Ovary (tissue), 10 donors: ENCODE measurements at regions of chr2 and their contacts with region 1.

Region 1: DNA sequence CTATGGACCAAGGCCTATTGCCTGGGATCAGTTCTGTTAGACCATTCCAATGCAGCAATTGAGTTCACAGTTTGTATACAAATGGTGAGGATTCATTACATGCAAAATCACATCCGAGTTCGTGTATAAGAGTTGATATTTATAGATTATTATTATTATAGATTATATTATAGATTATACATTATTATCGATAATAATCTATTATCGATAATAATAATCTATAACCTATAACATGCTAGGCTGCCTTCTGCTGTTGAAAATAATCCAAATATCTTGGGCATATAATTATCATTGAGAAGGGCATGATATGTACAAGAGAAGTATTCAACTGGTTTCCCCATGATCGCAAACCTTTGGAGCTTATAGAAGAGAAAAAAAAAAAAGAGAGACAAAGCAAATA is 135.7 kb downstream of the DPP4 start:
- DNase-seq: no peak
- H3K4me3 ChIP-seq: no peak overlapping the region
- H3K27ac ChIP-seq: no peak overlapping the region
- H3K4me1 ChIP-seq: no peaks in the 10 kb centered on the region
- H3K27me3 ChIP-seq: no peaks in the 10 kb centered on the region
- CTCF ChIP-seq: no peak
- EP300 ChIP-seq: no peak
- POLR2A ChIP-seq: no peak

Region 2: GRCh38 chr2:161104054-161104553 is 834.2 kb before region 1 on chr2:
- intact Hi-C with region 1: no loop called
- DNase-seq: no peak
- H3K4me3 ChIP-seq: no peak overlapping the region
- H3K27ac ChIP-seq: no peak overlapping the region
- H3K4me1 ChIP-seq: peaks cover 2% of the 10 kb centered on the region
- H3K27me3 ChIP-seq: no peaks in the 10 kb centered on the region
- CTCF ChIP-seq: no peak
- EP300 ChIP-seq: no peak
- POLR2A ChIP-seq: no peak

Region 3: GRCh38 chr2:161312996-161313395 is 625.3 kb before region 1 on chr2:
- intact Hi-C with region 1: no loop called
- DNase-seq: no peak
- H3K4me3 ChIP-seq: no peak overlapping the region
- H3K27ac ChIP-seq: no peak overlapping the region
- H3K4me1 ChIP-seq: no peaks in the 10 kb centered on the region
- H3K27me3 ChIP-seq: no peaks in the 10 kb centered on the region
- CTCF ChIP-seq: no peak
- EP300 ChIP-seq: no peak
- POLR2A ChIP-seq: no peak

Region 4: GRCh38 chr2:161992526-161992925 is 54.2 kb after region 1 on chr2:
- intact Hi-C with region 1: no loop called
- DNase-seq: no peak
- H3K4me3 ChIP-seq: no peak overlapping the region
- H3K27ac ChIP-seq: no peak overlapping the region
- H3K4me1 ChIP-seq: no peaks in the 10 kb centered on the region
- H3K27me3 ChIP-seq: no peaks in the 10 kb centered on the region
- CTCF ChIP-seq: no peak
- EP300 ChIP-seq: no peak
- POLR2A ChIP-seq: no peak

Region 5: DNA sequence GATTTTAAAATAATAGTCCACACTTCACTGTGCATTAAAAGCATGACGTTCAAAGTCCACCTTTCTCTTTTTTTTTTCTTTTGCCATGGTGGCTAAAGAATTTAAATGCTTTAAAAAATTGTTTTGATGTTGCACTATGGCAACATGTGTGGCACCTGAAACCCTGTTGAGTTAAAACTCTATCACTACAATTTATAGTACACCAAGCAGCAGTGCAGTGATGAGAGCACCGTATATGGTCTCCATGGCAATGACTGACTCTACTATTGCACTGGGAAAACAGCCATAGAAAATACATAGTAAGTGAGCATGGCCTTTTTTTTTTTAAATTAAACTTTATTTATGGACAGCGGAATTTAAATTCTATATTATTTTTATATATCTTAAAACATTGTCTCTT is 1498.6 kb after region 1 on chr2:
- intact Hi-C with region 1: loop called in 1 of 4 experiments (anchors 5 kb)
- DNase-seq: no peak
- H3K4me3 ChIP-seq: no peak overlapping the region
- H3K27ac ChIP-seq: no peak overlapping the region
- H3K4me1 ChIP-seq: no peaks in the 10 kb centered on the region
- H3K27me3 ChIP-seq: no peaks in the 10 kb centered on the region
- CTCF ChIP-seq: no peak
- EP300 ChIP-seq: no peak
- POLR2A ChIP-seq: no peak